Heart right ventricle (tissue), 16 donors: ENCODE measurements at regions of chr4 and their contacts with region 1.

Region 1: GRCh38 chr4:127203562-127204200 is 429.1 kb upstream of the INTU start:
- DNase-seq: no peak
- ATAC-seq: no peak
- H3K4me3 ChIP-seq: no peak overlapping the region
- H3K27ac ChIP-seq: no peak overlapping the region
- H3K4me1 ChIP-seq: no peaks in the 10 kb centered on the region
- H3K27me3 ChIP-seq: no peaks in the 10 kb centered on the region
- CTCF ChIP-seq: no peak

Region 2: GRCh38 chr4:126375462-126376054 is 828.1 kb before region 1 on chr4:
- intact Hi-C with region 1: loop called in 1 of 10 experiments (anchors 5 kb)
- DNase-seq: no peak
- ATAC-seq: peak in 1 of 8 donors; percentile 29
- H3K4me3 ChIP-seq: no peak overlapping the region
- H3K27ac ChIP-seq: peak overlapping the region in 1 of 10 donors; percentile 29
- H3K4me1 ChIP-seq: no peaks in the 10 kb centered on the region
- H3K27me3 ChIP-seq: no peaks in the 10 kb centered on the region
- CTCF ChIP-seq: no peak

Region 3: DNA sequence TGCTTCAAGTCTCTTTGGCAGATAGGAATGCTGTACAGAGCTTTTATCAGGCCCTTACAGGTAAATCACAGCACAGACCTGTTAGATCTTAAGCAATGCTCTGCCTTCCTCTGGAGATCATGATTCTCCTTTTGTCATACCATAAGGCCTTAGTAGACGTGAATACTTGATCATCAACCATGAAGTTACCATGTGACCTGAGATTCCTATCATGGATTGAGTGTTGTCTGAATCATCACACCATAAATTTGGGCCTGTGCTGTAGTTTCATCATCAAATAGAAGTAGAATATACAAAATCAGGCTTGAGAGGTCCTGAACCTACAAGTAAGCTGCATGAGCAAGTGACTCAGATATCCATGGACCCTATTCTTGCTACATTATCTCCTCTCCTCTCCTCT is 37.7 kb before region 1 on chr4:
- intact Hi-C with region 1: no loop called
- DNase-seq: no peak
- ATAC-seq: no peak
- H3K4me3 ChIP-seq: no peak overlapping the region
- H3K27ac ChIP-seq: no peak overlapping the region
- H3K4me1 ChIP-seq: no peaks in the 10 kb centered on the region
- H3K27me3 ChIP-seq: no peaks in the 10 kb centered on the region
- CTCF ChIP-seq: no peak

Region 4: DNA sequence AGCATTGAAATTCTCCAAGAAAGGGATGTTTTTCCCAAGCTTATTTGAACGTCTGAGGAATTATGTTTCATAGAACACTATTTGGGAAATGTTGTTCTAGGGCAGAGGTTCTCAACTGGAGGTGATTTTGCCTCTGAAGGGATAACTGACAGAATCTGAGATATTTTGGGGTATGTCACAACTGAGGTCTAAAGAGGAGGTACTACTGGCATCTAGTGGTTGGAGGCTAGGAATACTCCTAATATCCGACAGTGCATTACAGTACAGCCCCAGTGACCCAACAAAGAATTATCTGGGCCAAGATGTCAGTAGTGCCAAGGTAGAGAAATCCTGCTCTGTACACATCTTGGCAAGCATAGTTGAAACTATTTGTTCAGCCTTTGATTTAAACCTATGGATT is 584.8 kb after region 1 on chr4:
- intact Hi-C with region 1: no loop called
- DNase-seq: no peak
- ATAC-seq: peak in 1 of 8 donors; percentile 25
- H3K4me3 ChIP-seq: no peak overlapping the region
- H3K27ac ChIP-seq: no peak overlapping the region
- H3K4me1 ChIP-seq: peaks cover 0 to 13% (median 4%) of the 10 kb centered on the region in 9 donors
- H3K27me3 ChIP-seq: peaks cover 0 to 4% (median 0%) of the 10 kb centered on the region in 7 donors
- CTCF ChIP-seq: peak in 4 of 9 donors; percentile 11 to 26 (median 16)